H1 (cell line): ENCODE measurements at regions of chr6 and their contacts with region 1.

Region 1: GRCh38 chr6:12233693-12234571 is 56.2 kb upstream of the EDN1 start:
- DNase-seq: peak in 1 of 2 experiments; percentile 15
- H3K4me3 ChIP-seq: no peak overlapping the region
- H3K27ac ChIP-seq: no peak overlapping the region
- H3K4me1 ChIP-seq: peaks cover 0 to 7% (median 1%) of the 10 kb centered on the region in 4 experiments; a peak in 2 of 7 replicates
- H3K27me3 ChIP-seq: no peaks in the 10 kb centered on the region
- CTCF ChIP-seq: peak; percentile 2 to 96 (median 66)
- EP300 ChIP-seq: no peak
- POLR2A ChIP-seq: no peak
- RAD21 ChIP-seq: peak; percentile 74 to 79

Region 2: GRCh38 chr6:12150812-12151432 is 83.0 kb before region 1 on chr6:
- CTCF ChIA-PET with region 1: interaction called, 14 read pairs
- POLR2A ChIA-PET with region 1: no interaction called
- DNase-seq: peak in 1 of 2 experiments; percentile 67
- H3K4me3 ChIP-seq: no peak overlapping the region
- H3K27ac ChIP-seq: no peak overlapping the region
- H3K4me1 ChIP-seq: no peaks in the 10 kb centered on the region
- H3K27me3 ChIP-seq: no peaks in the 10 kb centered on the region
- CTCF ChIP-seq: peak; percentile 69 to 85 (median 78)
- EP300 ChIP-seq: no peak
- POLR2A ChIP-seq: no peak
- RAD21 ChIP-seq: peak; percentile 91 to 92

Region 3: DNA sequence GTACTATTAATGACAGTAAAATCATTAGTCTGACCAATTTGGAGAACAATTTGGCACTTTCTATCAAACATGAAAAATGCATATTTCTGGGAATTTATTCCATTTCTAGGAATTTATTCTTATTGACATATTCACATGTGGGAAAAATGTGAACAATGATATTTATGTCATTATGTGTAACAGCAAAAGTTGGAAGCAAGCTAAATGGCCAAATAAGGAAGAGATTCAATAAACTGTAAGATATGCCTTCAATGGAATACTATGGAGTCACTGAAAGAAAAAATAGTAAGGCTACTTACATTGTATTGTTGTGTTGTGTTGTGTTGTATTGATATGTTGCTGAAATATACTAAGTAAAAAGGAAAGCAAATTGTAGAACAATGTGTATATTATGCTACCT is 44.3 kb before region 1 on chr6:
- CTCF ChIA-PET with region 1: no interaction called
- POLR2A ChIA-PET with region 1: no interaction called
- DNase-seq: no peak
- H3K4me3 ChIP-seq: no peak overlapping the region
- H3K27ac ChIP-seq: no peak overlapping the region
- H3K4me1 ChIP-seq: no peaks in the 10 kb centered on the region
- H3K27me3 ChIP-seq: no peaks in the 10 kb centered on the region
- CTCF ChIP-seq: no peak
- EP300 ChIP-seq: no peak
- POLR2A ChIP-seq: no peak
- RAD21 ChIP-seq: no peak

Region 4: DNA sequence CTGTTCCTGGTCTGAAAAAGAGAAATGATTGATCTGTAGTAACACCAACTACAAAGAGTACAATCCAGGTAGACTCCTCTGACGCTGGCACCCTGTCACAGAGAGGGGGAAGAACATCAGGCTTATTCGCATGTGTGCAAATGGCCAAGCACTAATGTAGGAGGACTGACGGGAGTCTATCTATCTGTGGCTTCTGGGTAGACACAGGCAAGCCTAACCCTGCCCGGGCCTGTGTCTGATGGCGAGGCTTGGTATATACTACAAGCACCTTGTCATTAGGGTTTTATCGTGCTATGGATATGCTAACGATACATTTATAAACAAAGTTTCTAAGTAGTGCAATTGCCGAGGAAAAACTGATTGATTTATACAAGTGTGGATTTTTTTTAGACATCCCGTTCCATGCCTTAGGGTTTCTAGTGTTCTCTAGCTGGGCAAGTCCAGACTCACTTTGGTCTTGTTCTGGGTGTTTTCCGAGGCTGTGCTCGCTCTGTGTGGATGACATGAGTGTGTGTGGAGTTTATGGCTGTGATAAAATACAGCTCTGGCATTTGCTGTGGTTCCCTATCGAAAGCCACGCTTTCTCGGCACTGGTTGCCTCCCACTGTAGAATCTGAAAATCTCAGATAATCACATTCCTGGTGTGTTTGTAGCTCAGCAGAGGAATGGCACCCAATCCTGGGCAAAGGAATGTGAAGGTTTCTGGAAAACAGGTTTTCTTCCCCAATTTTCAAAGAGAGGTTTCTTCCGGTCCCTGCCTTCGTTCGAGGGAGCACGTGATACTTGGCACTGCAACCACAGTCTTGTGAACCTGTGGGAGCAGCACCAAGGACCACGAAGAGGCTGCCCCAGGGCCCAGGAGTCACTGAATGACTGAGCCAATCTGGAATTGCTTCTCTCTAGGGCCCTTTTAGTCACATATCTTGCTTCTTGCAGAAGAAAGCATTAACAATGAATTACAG is 11.2 kb before region 1 on chr6:
- CTCF ChIA-PET with region 1: interaction called, 11 read pairs
- POLR2A ChIA-PET with region 1: no interaction called
- DNase-seq: no peak
- H3K4me3 ChIP-seq: no peak overlapping the region
- H3K27ac ChIP-seq: no peak overlapping the region
- H3K4me1 ChIP-seq: no peaks in the 10 kb centered on the region
- H3K27me3 ChIP-seq: no peaks in the 10 kb centered on the region
- CTCF ChIP-seq: no peak
- EP300 ChIP-seq: no peak
- POLR2A ChIP-seq: no peak
- RAD21 ChIP-seq: no peak

Region 5: DNA sequence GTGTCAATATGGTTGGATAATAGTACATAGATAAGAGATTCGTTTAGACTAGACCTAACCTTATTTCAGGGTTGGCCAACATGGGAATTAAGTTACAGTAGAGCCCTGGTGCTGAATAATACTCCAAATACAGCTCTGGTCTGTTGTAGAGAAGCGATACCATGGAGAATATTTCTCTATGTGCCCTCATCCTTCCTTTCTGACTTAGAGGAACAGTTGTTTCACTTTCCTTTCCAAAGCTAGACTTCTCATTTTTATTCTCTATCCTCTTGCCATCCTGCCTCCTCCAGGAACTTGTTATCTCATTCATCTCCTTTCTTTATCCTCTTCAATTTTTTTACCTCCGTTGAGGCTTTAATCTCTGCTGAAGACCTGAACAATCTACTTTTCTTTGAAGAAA is 125.1 kb after region 1 on chr6:
- CTCF ChIA-PET with region 1: no interaction called
- POLR2A ChIA-PET with region 1: no interaction called
- DNase-seq: no peak
- H3K4me3 ChIP-seq: no peak overlapping the region
- H3K27ac ChIP-seq: no peak overlapping the region
- H3K4me1 ChIP-seq: peaks cover 3 to 12% (median 6%) of the 10 kb centered on the region in 4 experiments; a peak in 6 of 7 replicates
- H3K27me3 ChIP-seq: no peaks in the 10 kb centered on the region
- CTCF ChIP-seq: no peak
- EP300 ChIP-seq: no peak
- POLR2A ChIP-seq: no peak
- RAD21 ChIP-seq: no peak